Panc1 (cell line): ENCODE measurements at regions of chr4 and their contacts with region 1.

Region 1: DNA sequence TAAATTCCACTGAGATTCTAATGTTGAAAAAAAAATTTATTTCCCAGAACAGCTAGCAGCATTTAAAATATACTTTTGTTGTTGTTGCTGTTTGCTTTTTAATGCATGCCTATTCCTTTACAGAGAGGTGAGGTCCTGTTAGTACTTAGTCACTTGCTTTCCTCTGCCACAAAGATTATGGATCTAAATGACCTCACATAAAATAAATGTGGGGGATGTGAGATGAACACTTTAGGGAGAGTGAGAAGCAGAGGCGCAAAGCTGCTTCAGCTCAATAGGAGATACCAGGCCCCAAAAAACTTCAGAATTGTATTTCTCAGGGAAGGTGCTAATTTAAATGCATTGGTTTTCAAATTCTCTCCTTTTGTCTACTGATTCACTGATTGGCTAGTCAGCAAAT is 4.0 kb downstream of the LDB2 start:
- DNase-seq: no peak
- ATAC-seq: no peak
- H3K4me3 ChIP-seq: no peak overlapping the region
- H3K27ac ChIP-seq: no peak overlapping the region
- H3K4me1 ChIP-seq: no peaks in the 10 kb centered on the region
- H3K27me3 ChIP-seq: no peaks in the 10 kb centered on the region
- CTCF ChIP-seq: no peak

Region 2: DNA sequence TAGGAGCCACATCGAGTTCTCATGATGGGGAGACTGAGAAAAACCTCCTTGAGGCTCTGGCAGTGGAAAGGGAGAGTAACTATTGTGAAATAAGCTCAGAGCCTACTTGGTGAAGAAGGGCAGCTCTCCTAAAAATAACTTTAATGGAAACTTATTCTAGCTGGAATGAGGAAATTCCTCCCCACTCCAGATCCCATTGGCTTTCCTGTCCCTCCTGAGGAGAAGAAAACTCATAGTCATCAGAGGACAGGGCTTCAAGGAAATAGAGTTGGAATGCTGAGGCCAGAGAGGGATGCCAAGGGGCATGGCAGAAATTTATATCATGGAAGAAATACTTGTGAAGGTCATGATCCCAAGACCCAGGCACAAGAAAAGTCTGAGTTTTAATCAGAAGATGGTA is 597.4 kb before region 1 on chr4:
- CTCF ChIA-PET with region 1: no interaction called
- POLR2A ChIA-PET with region 1: no interaction called
- in situ Hi-C with region 1: no loop called
- intact Hi-C with region 1: no loop called
- DNase-seq: no peak
- ATAC-seq: no peak
- H3K4me3 ChIP-seq: no peak overlapping the region
- H3K27ac ChIP-seq: no peak overlapping the region
- H3K4me1 ChIP-seq: no peaks in the 10 kb centered on the region
- H3K27me3 ChIP-seq: no peaks in the 10 kb centered on the region; the same call in 1 of the 2 replicates
- CTCF ChIP-seq: no peak

Region 3: GRCh38 chr4:17220816-17221215 is 326.4 kb after region 1 on chr4:
- CTCF ChIA-PET with region 1: interaction called, 12 read pairs
- POLR2A ChIA-PET with region 1: no interaction called
- in situ Hi-C with region 1: no loop called
- intact Hi-C with region 1: no loop called
- DNase-seq: no peak
- ATAC-seq: no peak
- H3K4me3 ChIP-seq: no peak overlapping the region
- H3K27ac ChIP-seq: no peak overlapping the region
- H3K4me1 ChIP-seq: no peaks in the 10 kb centered on the region
- H3K27me3 ChIP-seq: no peaks in the 10 kb centered on the region
- CTCF ChIP-seq: no peak